Heart right ventricle (tissue), 16 donors: ENCODE measurements at regions of chr2 and their contacts with region 1.

Region 1: GRCh38 chr2:127526149-127527000 is at the start of gene IWS1:
- DNase-seq: peak; percentile 94 to 96
- ATAC-seq: peak; percentile 95 to 99 (median 98)
- H3K4me3 ChIP-seq: peak within 1 kb of the TSS; percentile 65 to 100 (median 89)
- H3K27ac ChIP-seq: peak within 1 kb of the TSS; percentile 41 to 98 (median 94)
- H3K4me1 ChIP-seq: peaks cover 0 to 33% (median 23%) of the 10 kb centered on the region in 9 donors
- H3K27me3 ChIP-seq: no peaks in the 10 kb centered on the region
- CTCF ChIP-seq: peak in 7 of 9 donors; percentile 23 to 56 (median 36)
- total RNA-seq, gene IWS1: 37.6 to 64.8 (median 46.4) TPM

Region 2: DNA sequence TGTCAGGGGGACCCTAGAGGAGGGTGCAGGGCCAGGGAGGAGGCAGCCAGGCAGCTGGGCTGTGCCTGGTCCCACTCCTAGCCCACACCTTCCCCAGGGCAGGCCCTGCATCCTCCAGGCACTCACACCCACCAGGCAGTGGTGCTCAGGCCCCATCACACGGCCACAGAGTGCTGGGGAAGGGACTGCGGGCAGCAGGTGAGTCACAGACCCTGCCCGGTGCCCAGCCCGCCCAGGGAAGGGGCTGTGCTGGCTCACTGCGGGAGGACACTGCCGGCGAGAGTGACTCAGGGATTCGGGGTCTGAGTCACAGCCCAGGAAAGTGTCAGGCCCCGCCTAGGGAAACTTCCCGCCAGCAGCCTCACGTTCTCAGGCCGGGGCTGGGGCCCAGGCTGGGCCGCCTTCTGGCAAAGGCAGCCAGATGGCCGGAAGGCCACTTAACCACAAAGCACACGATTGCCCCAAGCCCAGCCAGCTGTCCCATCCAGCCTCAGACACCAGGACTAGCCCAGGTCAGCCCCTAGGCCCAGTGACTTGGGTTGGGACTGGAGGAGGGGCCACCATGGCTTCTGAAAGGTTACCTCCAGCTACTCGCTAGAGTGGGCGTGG is 461.6 kb before region 1 on chr2:
- intact Hi-C with region 1: no loop called
- DNase-seq: peak; percentile 86 to 87
- ATAC-seq: peak; percentile 86 to 93 (median 89)
- H3K4me3 ChIP-seq: peak overlapping the region in 2 of 10 donors; percentile 5 to 22
- H3K27ac ChIP-seq: peak overlapping the region in 9 of 10 donors; percentile 38 to 76 (median 63)
- H3K4me1 ChIP-seq: peaks cover 0 to 55% (median 33%) of the 10 kb centered on the region in 9 donors
- H3K27me3 ChIP-seq: no peaks in the 10 kb centered on the region
- CTCF ChIP-seq: peak in 2 of 9 donors; percentile 11 to 21

Region 3: GRCh38 chr2:127566576-127566975 is 40.2 kb after region 1 on chr2:
- intact Hi-C with region 1: loop called in 1 of 10 experiments (anchors 5 kb)
- DNase-seq: no peak
- ATAC-seq: no peak
- H3K4me3 ChIP-seq: no peak overlapping the region
- H3K27ac ChIP-seq: no peak overlapping the region
- H3K4me1 ChIP-seq: peaks cover 3 to 39% (median 27%) of the 10 kb centered on the region in 9 donors
- H3K27me3 ChIP-seq: no peaks in the 10 kb centered on the region
- CTCF ChIP-seq: no peak

Region 4: DNA sequence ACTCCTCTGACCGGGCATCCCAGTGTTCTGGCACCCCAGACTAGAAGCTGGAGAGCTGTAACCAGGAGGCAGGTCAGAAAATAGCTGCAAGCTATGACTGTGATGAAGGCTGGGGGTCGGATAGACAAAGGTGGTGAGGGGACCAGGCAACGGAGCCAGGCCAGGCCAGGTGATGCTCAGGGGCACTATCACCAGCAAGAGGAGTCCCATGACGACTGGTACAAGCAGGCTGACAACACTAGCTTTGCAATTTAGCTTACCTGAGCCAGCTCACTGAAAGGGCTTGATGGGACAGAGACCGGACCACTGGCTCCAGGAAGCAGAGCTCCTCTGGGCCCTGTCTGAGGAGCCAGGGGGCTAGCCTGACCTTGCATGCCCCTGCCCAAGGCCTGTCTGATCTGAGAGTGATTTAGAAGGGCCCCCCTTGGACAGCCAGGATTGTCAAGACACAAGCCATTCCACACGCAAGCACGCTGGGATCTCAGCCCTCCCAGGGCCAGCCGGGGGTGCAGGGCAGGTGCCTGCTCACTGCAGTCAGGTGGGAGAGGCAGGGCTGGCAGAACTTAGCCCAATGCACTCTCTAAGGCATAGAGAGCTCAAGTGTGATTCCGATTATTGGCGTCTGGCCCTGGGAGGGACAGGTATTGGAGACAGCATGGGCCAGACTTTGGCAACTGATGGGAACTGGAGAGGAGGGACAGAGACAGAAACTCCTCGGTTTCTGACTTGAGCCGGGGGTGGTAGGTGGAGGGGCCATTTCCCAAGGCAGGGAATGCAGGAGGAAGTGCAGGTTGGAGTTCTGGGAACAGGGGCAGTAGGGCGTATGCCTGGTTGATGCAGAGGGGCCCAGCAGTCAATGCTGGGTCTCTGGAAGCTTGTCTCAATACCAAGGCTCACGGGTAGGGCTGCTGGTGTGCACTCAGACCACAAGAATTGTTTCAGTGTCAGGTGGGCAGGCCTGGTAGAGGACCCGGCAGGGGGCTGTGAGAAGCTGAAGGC is 56.8 kb after region 1 on chr2:
- intact Hi-C with region 1: no loop called
- DNase-seq: no peak
- ATAC-seq: no peak
- H3K4me3 ChIP-seq: no peak overlapping the region
- H3K27ac ChIP-seq: no peak overlapping the region
- H3K4me1 ChIP-seq: no peaks in the 10 kb centered on the region
- H3K27me3 ChIP-seq: no peaks in the 10 kb centered on the region
- CTCF ChIP-seq: no peak

Region 5: GRCh38 chr2:127649684-127650040 is 123.3 kb after region 1 on chr2:
- intact Hi-C with region 1: loop called in 1 of 10 experiments (anchors 10 kb)
- DNase-seq: peak; percentile 76 to 88
- ATAC-seq: peak; percentile 0 to 51 (median 31)
- H3K4me3 ChIP-seq: no peak overlapping the region
- H3K27ac ChIP-seq: peak overlapping the region; percentile 42 to 95 (median 83)
- H3K4me1 ChIP-seq: peaks cover 66 to 98% (median 86%) of the 10 kb centered on the region in 9 donors
- H3K27me3 ChIP-seq: no peaks in the 10 kb centered on the region
- CTCF ChIP-seq: peak; percentile 85 to 93 (median 89)